ENCODE measurements at regions of chr9 and their contacts with region 1.

Region 1: GRCh38 chr9:88741335-88741734 is 206.4 kb downstream of the NXNL2 start:
- DNase-seq: peak; percentile 23
- ATAC-seq: peak; percentile 50; the same call in 2 of the 3 replicates
- H3K4me3 ChIP-seq: no peak overlapping the region
- H3K27ac ChIP-seq: no peak overlapping the region
- H3K4me1 ChIP-seq: no peaks in the 10 kb centered on the region
- H3K27me3 ChIP-seq: peaks cover 1 to 12% of the 10 kb centered on the region in 2 experiments; a peak in 2 of 5 replicates
- CTCF ChIP-seq: peak; percentile 75
- EP300 ChIP-seq: no peak
- POLR2A ChIP-seq: no peak
- RAD21 ChIP-seq: peak; percentile 69

Region 2: GRCh38 chr9:88672874-88673689 is 68.3 kb before region 1 on chr9:
- CTCF ChIA-PET with region 1: no interaction called
- POLR2A ChIA-PET with region 1: no interaction called
- in situ Hi-C with region 1: no loop called
- intact Hi-C with region 1: loop called (anchors 1 kb)
- DNase-seq: peak; percentile 27
- ATAC-seq: peak; percentile 71
- H3K4me3 ChIP-seq: no peak overlapping the region
- H3K27ac ChIP-seq: no peak overlapping the region
- H3K4me1 ChIP-seq: peaks cover 5% of the 10 kb centered on the region; the same call in 1 of the 2 replicates
- H3K27me3 ChIP-seq: no peaks in the 10 kb centered on the region; a peak in 1 of 5 replicates
- CTCF ChIP-seq: peak; percentile 72
- EP300 ChIP-seq: no peak
- POLR2A ChIP-seq: no peak
- RAD21 ChIP-seq: no peak

Region 3: DNA sequence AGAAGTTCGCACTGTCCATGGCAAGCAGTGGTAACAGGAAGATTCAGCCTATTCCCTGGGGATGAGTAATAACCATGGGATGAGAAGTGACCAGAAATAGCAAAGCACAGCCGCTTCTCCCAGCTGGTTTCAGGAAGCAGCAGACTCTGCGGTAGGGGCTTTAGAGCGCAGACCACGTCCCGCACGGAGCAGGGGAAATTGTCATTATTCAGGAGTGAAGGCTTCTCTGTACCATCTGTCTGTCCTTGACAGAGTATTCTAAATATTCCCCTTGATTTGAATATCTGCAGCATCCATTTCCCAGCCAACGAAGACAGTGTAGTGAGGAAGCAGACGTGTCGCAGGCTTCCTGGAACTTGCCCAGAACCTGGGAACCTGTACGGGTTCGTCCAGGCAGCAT is 46.7 kb before region 1 on chr9:
- CTCF ChIA-PET with region 1: no interaction called
- POLR2A ChIA-PET with region 1: no interaction called
- in situ Hi-C with region 1: no loop called
- intact Hi-C with region 1: no loop called
- DNase-seq: no peak
- ATAC-seq: no peak
- H3K4me3 ChIP-seq: no peak overlapping the region
- H3K27ac ChIP-seq: no peak overlapping the region
- H3K4me1 ChIP-seq: peaks cover 47% of the 10 kb centered on the region
- H3K27me3 ChIP-seq: no peaks in the 10 kb centered on the region
- CTCF ChIP-seq: no peak
- EP300 ChIP-seq: no peak
- POLR2A ChIP-seq: no peak
- RAD21 ChIP-seq: no peak